Heart right ventricle (tissue), 16 donors: ENCODE measurements at regions of chr6 and their contacts with region 1.

Region 1: GRCh38 chr6:166950443-166950821 is 5.9 kb downstream of the RNASET2 start:
- DNase-seq: no peak
- ATAC-seq: peak; percentile 4 to 61 (median 23)
- H3K4me3 ChIP-seq: peak overlapping the region in 4 of 10 donors; percentile 39 to 54 (median 48)
- H3K27ac ChIP-seq: peak overlapping the region in 9 of 10 donors; percentile 67 to 89 (median 78)
- H3K4me1 ChIP-seq: peaks cover 0 to 54% (median 6%) of the 10 kb centered on the region in 9 donors
- H3K27me3 ChIP-seq: no peaks in the 10 kb centered on the region
- CTCF ChIP-seq: no peak

Region 2: DNA sequence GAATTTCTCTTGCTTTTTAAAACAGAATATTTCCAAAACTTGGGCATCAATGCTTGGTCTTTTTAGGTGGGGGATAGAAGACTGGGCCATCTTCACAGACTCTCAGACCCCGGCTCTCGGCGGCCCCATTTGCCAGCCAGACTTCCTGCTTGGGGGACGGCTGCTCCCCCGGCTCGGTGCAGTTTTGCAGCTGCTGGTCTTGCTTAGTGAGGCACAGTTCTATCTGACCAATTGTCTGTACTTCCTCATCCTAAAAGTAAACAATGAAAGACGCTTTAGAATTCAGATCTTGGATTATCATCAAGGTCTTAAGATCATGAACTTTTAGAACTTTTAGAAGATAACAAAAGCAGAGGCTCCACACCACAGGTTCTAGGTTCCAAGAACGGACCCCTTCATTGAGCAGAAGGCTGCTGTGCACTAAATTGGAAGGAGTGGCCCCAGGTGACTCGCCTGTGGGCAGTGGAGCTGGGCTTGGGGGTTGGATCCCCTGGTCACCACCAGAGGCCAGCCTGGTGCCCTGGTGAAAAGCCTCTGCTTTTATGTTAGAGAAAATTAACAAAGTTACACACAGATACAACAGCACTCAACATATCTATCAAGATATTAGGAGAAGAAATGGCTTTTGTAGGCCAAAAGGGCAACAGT is 20.8 kb before region 1 on chr6:
- intact Hi-C with region 1: loop called in 1 of 10 experiments (anchors 2 kb)
- DNase-seq: no peak
- ATAC-seq: peak in 2 of 8 donors; percentile 27 to 52
- H3K4me3 ChIP-seq: peak overlapping the region in 1 of 10 donors; percentile 40
- H3K27ac ChIP-seq: peak overlapping the region in 9 of 10 donors; percentile 44 to 88 (median 78)
- H3K4me1 ChIP-seq: peaks cover 0 to 39% (median 10%) of the 10 kb centered on the region in 9 donors
- H3K27me3 ChIP-seq: no peaks in the 10 kb centered on the region
- CTCF ChIP-seq: peak in 1 of 9 donors; percentile 12